GM10248 (cell line): ENCODE measurements at regions of chr1 and their contacts with region 1.

Region 1: DNA sequence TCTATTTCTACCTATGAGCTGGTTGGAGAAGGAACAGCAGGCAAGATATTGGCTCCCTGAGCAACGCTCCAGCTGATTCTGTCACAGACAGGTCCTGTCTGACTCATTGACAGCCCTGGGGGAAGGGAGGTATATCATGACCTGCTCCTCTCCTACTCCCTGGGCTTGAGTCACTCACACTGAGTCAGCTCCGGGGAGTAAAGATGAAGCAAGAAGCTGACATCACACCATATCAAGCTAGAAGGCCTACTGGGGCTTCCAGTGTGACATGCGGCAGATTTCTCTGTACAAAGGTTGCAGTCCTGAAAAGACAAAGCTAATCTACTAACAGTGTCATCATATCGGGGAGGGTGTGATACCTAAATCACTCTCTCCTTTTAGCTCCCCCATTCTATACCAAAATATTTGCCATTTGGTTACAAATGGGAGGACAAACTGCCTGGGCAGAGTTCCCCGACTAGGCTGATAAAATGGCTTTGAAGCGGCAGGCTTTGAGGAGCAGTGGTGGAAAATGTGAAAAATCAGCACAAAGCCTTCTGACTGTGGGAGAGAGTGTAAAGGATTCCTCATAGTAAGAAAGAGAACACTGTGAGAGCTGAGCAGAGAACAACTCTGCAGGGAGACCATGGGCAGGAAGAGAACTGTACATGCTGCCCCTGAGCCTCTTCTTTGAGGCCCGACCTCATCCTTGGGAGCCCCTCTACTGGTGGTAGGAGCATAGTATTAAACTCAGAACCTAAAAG is 15.5 kb downstream of the PI4KB start:
- DNase-seq: no peak
- CTCF ChIP-seq: no peak

Region 2: GRCh38 chr1:151292207-151293030 is 19.3 kb before region 1 on chr1:
- CTCF ChIA-PET with region 1: interaction called, 17 read pairs
- POLR2A ChIA-PET with region 1: no interaction called
- DNase-seq: no peak
- CTCF ChIP-seq: no peak

Region 3: DNA sequence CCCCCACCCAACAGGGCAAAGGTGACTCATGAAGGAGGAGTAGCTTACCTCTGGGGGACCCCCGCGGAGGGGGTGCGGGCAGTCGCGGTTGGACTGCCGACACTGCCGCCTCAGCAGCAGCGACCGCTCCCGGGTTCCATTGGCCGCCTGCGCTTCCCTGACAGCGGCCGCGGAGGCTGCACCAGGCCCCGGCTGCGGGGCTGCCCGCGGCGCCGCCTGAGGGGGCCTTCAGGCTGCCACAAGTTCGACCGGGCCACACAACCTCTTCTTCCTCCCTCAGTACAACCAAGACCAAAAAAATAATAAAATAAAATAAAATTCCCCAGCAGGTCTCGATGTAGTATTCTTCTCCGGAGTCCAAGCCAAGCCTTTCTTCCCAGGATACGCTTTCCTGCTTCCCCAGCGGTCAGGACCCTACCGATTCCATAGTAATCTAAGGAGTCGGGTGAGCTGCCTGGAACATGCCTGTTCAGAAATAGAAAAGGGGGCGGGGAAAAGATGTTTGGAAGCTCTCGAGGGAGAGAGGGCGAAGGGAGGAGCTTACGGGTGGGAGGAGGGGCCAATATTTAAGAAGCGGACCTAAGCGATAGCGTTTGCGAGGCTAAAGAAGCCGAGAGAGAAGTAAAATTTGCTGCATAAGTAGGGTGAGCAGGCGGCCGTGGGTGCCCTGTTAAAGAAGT is 15.6 kb after region 1 on chr1 and contains the start of gene PI4KB:
- CTCF ChIA-PET with region 1: interaction called, 12 read pairs
- POLR2A ChIA-PET with region 1: interaction called, 24 read pairs
- DNase-seq: peak; percentile 95
- CTCF ChIP-seq: no peak

Region 4: DNA sequence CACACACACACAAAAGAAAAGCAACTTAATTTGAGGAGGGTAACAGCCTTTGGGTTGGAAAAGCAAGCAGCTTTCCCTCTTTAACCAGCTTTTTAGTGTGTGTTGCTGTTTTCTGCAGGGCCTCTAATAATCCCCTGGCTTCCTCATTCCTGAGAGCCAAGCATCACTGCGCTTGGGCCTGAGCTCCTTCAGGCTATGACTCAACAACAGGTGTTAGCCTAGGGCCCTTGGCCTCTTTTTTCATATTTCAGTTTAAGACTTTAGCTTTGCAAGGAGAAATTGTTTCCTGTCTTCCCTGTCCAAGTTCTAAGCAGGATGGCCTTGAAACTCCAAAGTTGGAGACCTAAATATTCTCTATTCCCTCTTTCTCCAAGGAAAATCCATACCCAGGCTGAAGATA is 273.9 kb after region 1 on chr1:
- CTCF ChIA-PET with region 1: no interaction called
- POLR2A ChIA-PET with region 1: no interaction called
- DNase-seq: no peak
- CTCF ChIP-seq: no peak